CD4-positive, alpha-beta memory T cell (primary cell): ENCODE measurements at regions of chr2 and their contacts with region 1.

Region 1: GRCh38 chr2:113138428-113139322 is 11.3 kb downstream of the IL1RN start:
- DNase-seq: peak; percentile 72 to 81 (median 79)
- H3K4me3 ChIP-seq: peak overlapping the region in 1 of 2 donors; percentile 14
- H3K4me3 Mint-ChIP-seq: peak overlapping the region; percentile 50 to 79 (median 74)
- H3K27ac ChIP-seq: no peak overlapping the region
- H3K27ac Mint-ChIP-seq: peak overlapping the region; percentile 67 to 85 (median 79)
- H3K4me1 ChIP-seq: peaks cover 12% of the 10 kb centered on the region
- H3K4me1 Mint-ChIP-seq: peaks cover 12 to 24% (median 16%) of the 10 kb centered on the region in 4 donors
- H3K27me3 ChIP-seq: no peaks in the 10 kb centered on the region
- H3K27me3 Mint-ChIP-seq: no peaks in the 10 kb centered on the region

Region 2: GRCh38 chr2:112666764-112667122 is 471.9 kb before region 1 on chr2:
- CTCF ChIA-PET with region 1: no interaction called
- POLR2A ChIA-PET with region 1: no interaction called
- intact Hi-C with region 1: no loop called
- DNase-seq: no peak
- H3K4me3 ChIP-seq: no peak overlapping the region
- H3K4me3 Mint-ChIP-seq: no peak overlapping the region
- H3K27ac ChIP-seq: no peak overlapping the region
- H3K27ac Mint-ChIP-seq: peak overlapping the region in 4 of 7 donors; percentile 58 to 78 (median 66)
- H3K4me1 ChIP-seq: no peaks in the 10 kb centered on the region
- H3K4me1 Mint-ChIP-seq: peaks cover 3 to 11% (median 4%) of the 10 kb centered on the region in 4 donors
- H3K27me3 ChIP-seq: no peaks in the 10 kb centered on the region
- H3K27me3 Mint-ChIP-seq: no peaks in the 10 kb centered on the region

Region 3: DNA sequence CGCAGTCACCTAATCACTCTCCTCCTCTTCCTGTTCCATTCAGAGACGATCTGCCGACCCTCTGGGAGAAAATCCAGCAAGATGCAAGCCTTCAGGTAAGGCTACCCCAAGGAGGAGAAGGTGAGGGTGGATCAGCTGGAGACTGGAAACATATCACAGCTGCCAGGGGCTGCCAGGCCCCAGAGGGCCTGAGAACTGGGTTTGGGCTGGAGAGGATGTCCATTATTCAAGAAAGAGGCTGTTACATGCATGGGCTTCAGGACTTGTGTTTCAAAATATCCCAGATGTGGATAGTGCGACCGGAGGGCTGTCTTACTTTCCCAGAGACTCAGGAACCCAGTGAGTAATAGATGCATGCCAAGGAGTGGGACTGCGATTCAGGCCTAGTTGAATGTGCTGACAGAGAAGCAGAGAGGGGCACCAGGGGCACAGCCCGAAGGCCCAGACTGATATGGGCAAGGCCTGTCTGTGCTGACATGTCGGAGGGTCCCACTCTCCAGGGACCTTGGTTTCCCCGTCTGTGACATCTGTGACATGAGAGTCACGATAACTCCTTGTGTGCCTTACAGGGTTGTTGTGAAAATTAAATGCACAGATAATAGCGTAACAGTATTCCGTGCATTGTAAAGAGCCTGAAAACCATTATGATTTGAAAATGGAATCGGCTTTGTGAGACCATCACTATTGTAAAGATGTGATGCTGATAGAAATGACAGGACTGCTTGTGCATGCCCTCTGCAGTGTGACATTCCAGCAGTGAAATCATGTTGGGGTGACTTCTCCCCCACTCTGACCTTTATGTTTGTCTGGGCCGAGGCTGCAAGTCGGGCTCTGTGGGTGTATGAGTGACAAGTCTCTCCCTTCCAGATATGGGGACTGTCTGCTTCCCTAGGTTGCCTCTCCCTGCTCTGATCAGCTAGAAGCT is 10.8 kb before region 1 on chr2:
- CTCF ChIA-PET with region 1: interaction called, 19 read pairs
- POLR2A ChIA-PET with region 1: interaction called, 6 read pairs
- intact Hi-C with region 1: no loop called
- DNase-seq: no peak
- H3K4me3 ChIP-seq: no peak overlapping the region
- H3K4me3 Mint-ChIP-seq: no peak overlapping the region
- H3K27ac ChIP-seq: no peak overlapping the region
- H3K27ac Mint-ChIP-seq: no peak overlapping the region
- H3K4me1 ChIP-seq: no peaks in the 10 kb centered on the region
- H3K4me1 Mint-ChIP-seq: peaks cover 6 to 9% (median 8%) of the 10 kb centered on the region in 4 donors
- H3K27me3 ChIP-seq: no peaks in the 10 kb centered on the region
- H3K27me3 Mint-ChIP-seq: peaks cover 8% of the 10 kb centered on the region in 2 donors

Region 4: GRCh38 chr2:113167115-113167932 is 28.6 kb after region 1 on chr2:
- CTCF ChIA-PET with region 1: interaction called, 150 read pairs
- POLR2A ChIA-PET with region 1: interaction called, 56 read pairs
- intact Hi-C with region 1: no loop called
- DNase-seq: peak in 4 of 5 donors; percentile 29 to 46 (median 34)
- H3K4me3 ChIP-seq: peak overlapping the region in 1 of 2 donors; percentile 7
- H3K4me3 Mint-ChIP-seq: peak overlapping the region; percentile 57 to 89 (median 80)
- H3K27ac ChIP-seq: peak overlapping the region; percentile 56
- H3K27ac Mint-ChIP-seq: peak overlapping the region; percentile 87 to 98 (median 97)
- H3K4me1 ChIP-seq: peaks cover 65% of the 10 kb centered on the region
- H3K4me1 Mint-ChIP-seq: peaks cover 50 to 75% (median 65%) of the 10 kb centered on the region in 4 donors
- H3K27me3 ChIP-seq: no peaks in the 10 kb centered on the region
- H3K27me3 Mint-ChIP-seq: no peaks in the 10 kb centered on the region

Region 5: DNA sequence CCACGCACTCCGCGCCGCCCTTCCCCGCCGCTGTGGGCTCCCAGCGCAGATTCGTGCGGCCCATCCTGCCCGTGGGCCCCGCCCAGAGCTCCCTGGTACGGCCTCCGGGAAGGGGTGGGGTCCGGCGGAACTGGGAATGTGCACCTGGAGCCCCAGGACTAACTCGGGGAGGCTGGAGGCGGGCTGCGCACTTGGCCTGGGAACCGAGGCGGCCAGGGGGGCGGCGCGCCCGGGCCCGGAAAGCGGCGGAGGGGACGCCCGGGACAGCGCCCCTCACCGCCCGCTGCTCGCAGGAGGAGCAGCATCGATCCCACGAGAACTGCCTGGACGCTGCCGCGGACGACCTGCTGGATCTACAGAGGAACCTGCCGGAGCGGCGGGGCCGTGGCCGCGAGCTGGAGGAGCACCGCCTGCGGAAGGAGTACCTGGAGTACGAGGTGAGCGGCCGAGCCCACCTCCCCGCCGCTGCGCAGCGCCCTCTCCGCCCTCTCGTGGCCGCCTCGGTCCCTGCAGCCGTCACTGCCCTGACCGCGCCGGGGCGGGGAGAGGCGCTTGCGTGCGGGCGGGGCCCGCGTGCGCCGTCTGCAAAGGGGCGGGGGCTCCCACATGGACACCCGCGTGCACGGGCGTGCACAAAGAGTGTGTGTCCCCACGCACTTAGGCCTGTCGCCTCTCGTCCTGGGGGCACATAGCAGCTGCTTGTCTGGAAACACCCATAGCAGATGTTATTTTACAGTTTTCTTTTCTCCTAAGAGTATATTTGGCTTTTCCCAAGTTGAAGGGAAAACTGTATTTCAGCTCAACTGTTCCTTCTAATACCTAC is 60.3 kb after region 1 on chr2:
- CTCF ChIA-PET with region 1: interaction called, 662 read pairs
- POLR2A ChIA-PET with region 1: interaction called, 48 read pairs
- intact Hi-C with region 1: loop called (anchors 1 kb)
- DNase-seq: peak; percentile 42 to 70 (median 58)
- H3K4me3 ChIP-seq: no peak overlapping the region
- H3K4me3 Mint-ChIP-seq: no peak overlapping the region
- H3K27ac ChIP-seq: no peak overlapping the region
- H3K27ac Mint-ChIP-seq: peak overlapping the region in 2 of 7 donors; percentile 10 to 60
- H3K4me1 ChIP-seq: peaks cover 10% of the 10 kb centered on the region
- H3K4me1 Mint-ChIP-seq: peaks cover 9 to 42% (median 12%) of the 10 kb centered on the region in 4 donors
- H3K27me3 ChIP-seq: no peaks in the 10 kb centered on the region
- H3K27me3 Mint-ChIP-seq: no peaks in the 10 kb centered on the region

Region 6: DNA sequence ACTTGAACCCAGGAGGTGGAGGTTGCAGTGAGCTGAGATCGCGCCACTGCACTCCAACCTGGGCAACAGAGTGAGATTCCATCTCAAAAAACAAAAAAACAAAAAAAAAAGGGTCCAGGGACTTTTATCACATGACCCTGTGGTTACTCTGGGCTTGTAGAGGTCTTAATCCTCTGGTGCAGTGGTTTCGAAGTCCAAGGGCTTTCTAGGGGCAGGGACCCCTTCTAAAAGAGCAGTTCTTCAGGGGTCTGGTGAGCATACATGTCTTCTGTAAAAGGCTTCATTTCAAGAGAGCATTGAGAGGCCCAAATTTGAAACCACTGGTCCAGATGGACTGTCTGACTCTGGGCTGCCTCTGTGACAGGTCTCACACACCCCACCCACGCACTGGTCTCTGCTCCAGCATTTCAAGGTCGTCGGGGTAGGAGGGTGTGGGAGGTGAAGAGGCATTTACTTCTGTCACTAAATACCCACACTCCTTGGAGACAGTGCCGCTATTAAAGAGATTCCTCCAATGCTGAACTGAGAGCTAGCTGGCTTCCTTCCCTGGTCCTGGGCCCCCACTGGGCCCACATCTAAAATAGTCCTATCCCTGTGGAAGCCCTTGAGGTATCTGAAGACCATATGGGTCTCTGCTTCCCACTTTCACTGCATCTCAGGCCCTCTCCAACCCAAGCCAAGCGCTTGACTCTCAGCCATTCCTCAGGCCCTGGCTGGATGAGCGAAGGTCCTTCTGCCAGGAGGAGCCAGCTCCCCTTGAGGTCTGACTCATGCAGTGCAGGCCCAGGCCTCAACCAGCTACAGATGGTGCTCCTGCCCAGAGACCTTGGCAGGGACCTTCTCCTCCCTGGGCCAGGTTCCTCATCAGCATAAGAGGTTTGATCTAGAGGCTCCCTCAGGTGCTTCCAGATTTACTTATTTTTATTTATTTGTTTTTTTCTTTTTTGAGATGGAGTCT is 95.2 kb after region 1 on chr2:
- CTCF ChIA-PET with region 1: interaction called, 17 read pairs
- POLR2A ChIA-PET with region 1: no interaction called
- intact Hi-C with region 1: no loop called
- DNase-seq: no peak
- H3K4me3 ChIP-seq: no peak overlapping the region
- H3K4me3 Mint-ChIP-seq: peak overlapping the region in 1 of 8 donors; percentile 54
- H3K27ac ChIP-seq: no peak overlapping the region
- H3K27ac Mint-ChIP-seq: no peak overlapping the region
- H3K4me1 ChIP-seq: peaks cover 10% of the 10 kb centered on the region
- H3K4me1 Mint-ChIP-seq: peaks cover 3 to 33% (median 7%) of the 10 kb centered on the region in 4 donors
- H3K27me3 ChIP-seq: no peaks in the 10 kb centered on the region
- H3K27me3 Mint-ChIP-seq: no peaks in the 10 kb centered on the region

Region 7: GRCh38 chr2:113370478-113371091 is 231.9 kb after region 1 on chr2:
- CTCF ChIA-PET with region 1: interaction called, 39 read pairs
- POLR2A ChIA-PET with region 1: no interaction called
- intact Hi-C with region 1: loop called (anchors 1 kb)
- DNase-seq: peak; percentile 61 to 70 (median 66)
- H3K4me3 ChIP-seq: no peak overlapping the region
- H3K4me3 Mint-ChIP-seq: no peak overlapping the region
- H3K27ac ChIP-seq: no peak overlapping the region
- H3K27ac Mint-ChIP-seq: peak overlapping the region in 2 of 7 donors; percentile 4 to 76
- H3K4me1 ChIP-seq: no peaks in the 10 kb centered on the region
- H3K4me1 Mint-ChIP-seq: peaks cover 0 to 5% (median 1%) of the 10 kb centered on the region in 4 donors
- H3K27me3 ChIP-seq: no peaks in the 10 kb centered on the region
- H3K27me3 Mint-ChIP-seq: peaks cover 4 to 5% of the 10 kb centered on the region in 2 donors